K562 (cell line): ENCODE measurements at regions of chr20 and their contacts with region 1.

Region 1: GRCh38 chr20:41693136-41693979 is 75.2 kb upstream of the CHD6 start:
- DNase-seq: peak; percentile 64 to 90 (median 66)
- ATAC-seq: peak; percentile 77
- H3K4me3 ChIP-seq: peak overlapping the region; percentile 59
- H3K27ac ChIP-seq: peak overlapping the region; percentile 93
- H3K4me1 ChIP-seq: peaks cover 29 to 59% of the 10 kb centered on the region in 2 experiments
- H3K27me3 ChIP-seq: no peaks in the 10 kb centered on the region
- CTCF ChIP-seq: peak in 2 of 3 experiments; percentile 27 to 70; a peak in 4 of 6 replicates
- EP300 ChIP-seq: 0 out of 2 replicates have a peak, but pooled peaks have one; percentile 14
- POLR2A ChIP-seq: peak; percentile 82
- RAD21 ChIP-seq: peak in 1 of 2 experiments; percentile 5; a peak in 1 of 4 replicates

Region 2: DNA sequence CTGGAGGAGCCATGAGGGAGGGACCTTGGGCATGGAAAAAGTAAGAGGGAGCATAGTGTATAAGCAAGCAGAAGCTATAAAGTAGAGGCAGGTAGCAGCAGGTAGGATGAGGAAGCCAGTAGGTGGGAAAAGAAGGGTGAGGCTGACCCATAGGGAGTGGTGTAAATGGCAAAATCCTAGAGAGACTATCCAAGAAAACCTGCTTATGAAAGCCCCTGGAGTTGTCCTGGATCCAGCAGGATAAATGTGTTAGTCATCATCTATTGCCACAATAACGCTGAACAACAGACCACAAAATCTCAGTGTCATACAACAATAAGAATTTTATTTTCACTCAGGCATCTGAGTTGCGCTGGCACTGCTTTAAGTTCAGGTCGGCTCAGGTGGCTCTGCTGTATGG is 105.4 kb before region 1 on chr20:
- CTCF ChIA-PET with region 1: no interaction called
- POLR2A ChIA-PET with region 1: no interaction called
- in situ Hi-C with region 1: no loop called
- intact Hi-C with region 1: no loop called
- DNase-seq: no peak
- ATAC-seq: no peak
- H3K4me3 ChIP-seq: no peak overlapping the region
- H3K27ac ChIP-seq: no peak overlapping the region
- H3K4me1 ChIP-seq: no peaks in the 10 kb centered on the region
- H3K27me3 ChIP-seq: no peaks in the 10 kb centered on the region
- CTCF ChIP-seq: no peak
- EP300 ChIP-seq: no peak
- POLR2A ChIP-seq: no peak
- RAD21 ChIP-seq: no peak

Region 3: DNA sequence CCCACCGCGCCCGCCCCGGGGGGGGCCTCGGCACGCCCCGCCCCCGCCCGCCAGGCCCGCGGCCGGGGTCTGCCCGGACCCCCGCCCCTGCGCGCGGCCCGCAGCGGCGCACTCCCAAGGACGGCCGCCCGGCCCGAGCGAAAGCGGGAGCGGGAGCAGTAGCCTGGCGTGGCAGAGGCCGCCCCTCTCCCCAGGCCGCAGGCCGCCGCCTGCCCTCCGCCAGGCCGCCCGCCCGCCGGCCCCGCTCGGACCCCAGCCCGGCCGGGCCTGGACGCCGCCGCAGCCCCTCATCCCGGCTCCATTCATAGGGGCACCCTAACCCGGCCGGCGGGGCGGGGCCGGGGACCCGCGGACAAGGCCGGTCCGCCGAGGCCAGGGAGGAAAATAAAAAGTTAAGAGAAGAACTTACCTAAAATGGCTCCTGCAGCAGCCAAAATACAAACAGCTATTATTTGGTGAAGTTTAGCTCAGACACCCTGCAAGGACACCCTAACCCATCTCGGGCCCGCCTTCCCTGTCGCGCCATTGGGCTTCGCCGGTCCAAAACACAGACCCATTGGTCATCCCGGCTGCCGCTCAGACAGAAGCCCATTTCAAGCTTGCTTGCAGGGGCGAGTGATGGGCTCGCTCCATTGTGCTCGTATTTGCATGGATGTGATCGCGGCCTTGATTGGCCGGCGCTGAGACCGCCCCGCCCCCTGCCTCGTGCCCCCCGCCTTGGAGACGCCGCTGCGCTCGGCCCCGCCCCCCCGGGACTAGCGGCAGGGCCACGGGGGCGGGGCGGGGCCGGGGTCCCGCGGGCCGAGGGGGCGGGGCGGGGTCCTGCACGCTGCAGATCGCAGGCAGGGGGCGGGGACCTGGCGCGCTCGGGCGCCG is 75.2 kb before region 1 on chr20 and contains the start of gene CHD6:
- CTCF ChIA-PET with region 1: no interaction called
- POLR2A ChIA-PET with region 1: interaction called, 5 read pairs
- in situ Hi-C with region 1: no loop called
- intact Hi-C with region 1: loop called (anchors 5 kb)
- DNase-seq: peak; percentile 97 to 100 (median 98)
- ATAC-seq: peak; percentile 99
- H3K4me3 ChIP-seq: peak within 1 kb of the TSS; percentile 96
- H3K27ac ChIP-seq: peak within 1 kb of the TSS; percentile 90
- H3K4me1 ChIP-seq: peaks cover 5 to 21% of the 10 kb centered on the region in 2 experiments
- H3K27me3 ChIP-seq: no peaks in the 10 kb centered on the region; a peak in 1 of 5 replicates
- CTCF ChIP-seq: no peak
- EP300 ChIP-seq: no peak
- POLR2A ChIP-seq: peak; percentile 71
- RAD21 ChIP-seq: no peak
- polyA plus RNA-seq, gene CHD6: 3.9 to 10.9 TPM

Region 4: GRCh38 chr20:41716436-41716835 is 23.1 kb after region 1 on chr20:
- CTCF ChIA-PET with region 1: no interaction called
- POLR2A ChIA-PET with region 1: interaction called, 15 read pairs
- in situ Hi-C with region 1: no loop called
- intact Hi-C with region 1: no loop called
- DNase-seq: no peak
- ATAC-seq: no peak
- H3K4me3 ChIP-seq: no peak overlapping the region
- H3K27ac ChIP-seq: no peak overlapping the region
- H3K4me1 ChIP-seq: peaks cover 14 to 41% of the 10 kb centered on the region in 2 experiments
- H3K27me3 ChIP-seq: no peaks in the 10 kb centered on the region
- CTCF ChIP-seq: no peak
- EP300 ChIP-seq: no peak
- POLR2A ChIP-seq: no peak
- RAD21 ChIP-seq: no peak

Region 5: DNA sequence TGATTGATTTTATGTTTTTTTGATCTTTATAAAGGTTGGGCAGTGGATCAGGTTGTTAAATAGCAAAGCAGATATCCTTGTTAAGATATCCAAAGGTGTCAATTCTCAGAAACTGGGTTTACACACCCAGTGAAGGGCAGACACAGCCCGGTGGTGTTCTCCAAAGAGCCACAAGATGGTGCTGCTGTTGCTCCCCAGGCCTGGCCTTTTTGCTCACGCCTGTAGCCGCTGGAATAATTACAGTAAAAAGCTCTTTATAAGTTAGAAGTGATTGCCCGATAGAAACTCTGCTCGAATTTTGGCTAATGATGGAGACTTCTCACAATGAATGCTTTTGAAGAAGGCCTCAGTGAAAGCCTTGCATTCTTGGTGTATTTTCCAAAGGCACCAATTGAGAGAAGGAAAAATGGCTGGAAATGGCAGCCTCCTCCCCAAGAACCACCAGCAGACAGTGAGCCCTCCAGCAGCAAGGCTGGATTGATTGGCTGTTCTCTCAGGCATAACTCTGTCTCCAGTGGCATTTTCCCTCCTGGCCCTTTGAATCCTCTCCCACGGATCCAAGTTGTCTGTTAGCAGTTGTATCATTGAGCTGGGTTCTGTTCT is 45.3 kb after region 1 on chr20:
- CTCF ChIA-PET with region 1: no interaction called
- POLR2A ChIA-PET with region 1: no interaction called
- in situ Hi-C with region 1: no loop called
- intact Hi-C with region 1: loop called (anchors 2 kb)
- DNase-seq: peak; percentile 57 to 79 (median 64)
- ATAC-seq: peak; percentile 97
- H3K4me3 ChIP-seq: no peak overlapping the region
- H3K27ac ChIP-seq: no peak overlapping the region
- H3K4me1 ChIP-seq: no peaks in the 10 kb centered on the region; a peak in 1 of 5 replicates
- H3K27me3 ChIP-seq: no peaks in the 10 kb centered on the region
- CTCF ChIP-seq: peak; percentile 85 to 94 (median 93)
- EP300 ChIP-seq: no peak
- POLR2A ChIP-seq: no peak
- RAD21 ChIP-seq: peak; percentile 80 to 85

Region 6: GRCh38 chr20:41872930-41873329 is 179.6 kb after region 1 on chr20:
- CTCF ChIA-PET with region 1: no interaction called
- POLR2A ChIA-PET with region 1: no interaction called
- in situ Hi-C with region 1: no loop called
- intact Hi-C with region 1: no loop called
- DNase-seq: no peak
- ATAC-seq: no peak
- H3K4me3 ChIP-seq: no peak overlapping the region
- H3K27ac ChIP-seq: no peak overlapping the region
- H3K4me1 ChIP-seq: no peaks in the 10 kb centered on the region
- H3K27me3 ChIP-seq: no peaks in the 10 kb centered on the region
- CTCF ChIP-seq: no peak
- EP300 ChIP-seq: no peak
- POLR2A ChIP-seq: no peak
- RAD21 ChIP-seq: no peak